Esophagus muscularis mucosa (tissue), 4 donors: ENCODE measurements at regions of chr17 and their contacts with region 1.

Region 1: DNA sequence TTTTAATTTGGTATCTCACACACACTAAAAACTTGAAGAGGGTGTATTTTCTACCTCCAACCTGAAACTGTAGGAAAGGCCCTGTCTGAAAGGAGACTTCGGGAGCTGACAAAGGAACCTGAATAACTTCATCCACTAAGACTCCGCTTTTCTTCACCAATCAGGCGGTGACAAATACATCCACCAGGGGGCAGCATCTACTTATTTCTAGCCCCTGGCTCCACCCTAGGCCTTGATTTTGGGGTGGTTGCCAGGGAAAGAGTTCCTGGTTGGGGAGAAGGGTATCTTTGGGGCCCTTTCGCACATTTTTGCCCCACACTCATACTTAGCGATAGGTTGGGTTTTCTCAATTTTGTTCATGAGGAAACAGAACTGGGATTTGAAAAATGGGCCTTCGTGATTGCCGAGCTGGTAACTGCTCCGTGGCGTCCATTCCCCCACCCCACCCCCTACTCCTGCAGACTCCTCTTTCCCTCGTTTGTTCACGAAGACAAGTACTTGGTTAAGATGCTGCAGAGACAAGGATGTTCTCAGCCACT is 4.8 kb upstream of the ARL4D start:
- DNase-seq: peak; percentile 98
- H3K4me3 ChIP-seq: peak overlapping the region; percentile 26 to 30 (median 28)
- H3K27ac ChIP-seq: peak overlapping the region; percentile 60 to 75 (median 72)
- H3K4me1 ChIP-seq: peaks cover 8 to 30% (median 25%) of the 10 kb centered on the region in 4 donors
- H3K27me3 ChIP-seq: no peaks in the 10 kb centered on the region
- CTCF ChIP-seq: peak; percentile 96 to 99 (median 98)
- EP300 ChIP-seq: no peak
- POLR2A ChIP-seq: no peak

Region 2: GRCh38 chr17:43428524-43428923 is 34.5 kb after region 1 on chr17:
- intact Hi-C with region 1: loop called (anchors 5 kb)
- DNase-seq: no peak
- H3K4me3 ChIP-seq: no peak overlapping the region
- H3K27ac ChIP-seq: no peak overlapping the region
- H3K4me1 ChIP-seq: peaks cover 6 to 21% (median 16%) of the 10 kb centered on the region in 4 donors
- H3K27me3 ChIP-seq: no peaks in the 10 kb centered on the region
- CTCF ChIP-seq: peak in 2 of 3 experiments; percentile 36 to 47
- EP300 ChIP-seq: no peak
- POLR2A ChIP-seq: no peak

Region 3: GRCh38 chr17:43482103-43483012 is 88.3 kb after region 1 on chr17:
- intact Hi-C with region 1: loop called (anchors 1 kb)
- DNase-seq: no peak
- H3K4me3 ChIP-seq: no peak overlapping the region
- H3K27ac ChIP-seq: peak overlapping the region; percentile 80 to 87 (median 86)
- H3K4me1 ChIP-seq: peaks cover 29 to 40% (median 36%) of the 10 kb centered on the region in 4 donors
- H3K27me3 ChIP-seq: no peaks in the 10 kb centered on the region
- CTCF ChIP-seq: no peak
- EP300 ChIP-seq: no peak
- POLR2A ChIP-seq: no peak